Activated naive CD4-positive, alpha-beta T cell treated with anti-CD3 and anti-CD28 coated beads for 36 hours (primary cell): ENCODE measurements at regions of chr10 and their contacts with region 1.

Region 1: DNA sequence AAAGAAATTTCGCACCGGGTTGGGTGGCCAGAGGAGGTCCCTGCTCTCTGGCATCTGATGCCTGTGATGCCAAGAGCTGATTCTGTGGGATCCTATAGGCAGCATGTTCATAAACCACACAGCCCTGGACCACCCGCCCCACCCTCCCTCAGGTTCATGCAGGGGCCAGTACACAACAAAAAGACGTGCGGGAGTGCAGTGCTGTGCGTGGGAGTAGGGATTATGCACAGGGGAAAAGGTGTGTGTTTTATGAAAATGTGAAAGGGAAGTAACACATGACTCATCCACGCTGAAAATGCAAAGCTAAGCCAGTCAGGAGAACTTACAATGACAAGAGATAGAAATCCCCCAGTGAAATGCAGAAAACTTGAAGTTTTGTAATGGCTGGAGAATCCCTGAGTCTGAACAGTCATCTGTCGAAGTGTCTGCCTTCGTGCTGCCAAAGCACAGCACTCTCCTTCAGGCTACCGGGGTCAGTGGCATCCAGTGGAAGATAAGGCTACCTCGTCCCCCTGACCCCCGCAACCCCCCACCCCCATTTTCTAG is 1.1 kb downstream of the KIAA1217 start:
- DNase-seq: peak; percentile 78
- H3K4me3 Mint-ChIP-seq: peak overlapping the region; percentile 69
- H3K27ac Mint-ChIP-seq: peak overlapping the region; percentile 76
- H3K4me1 Mint-ChIP-seq: peaks cover 29% of the 10 kb centered on the region
- H3K27me3 Mint-ChIP-seq: peaks cover 47% of the 10 kb centered on the region

Region 2: DNA sequence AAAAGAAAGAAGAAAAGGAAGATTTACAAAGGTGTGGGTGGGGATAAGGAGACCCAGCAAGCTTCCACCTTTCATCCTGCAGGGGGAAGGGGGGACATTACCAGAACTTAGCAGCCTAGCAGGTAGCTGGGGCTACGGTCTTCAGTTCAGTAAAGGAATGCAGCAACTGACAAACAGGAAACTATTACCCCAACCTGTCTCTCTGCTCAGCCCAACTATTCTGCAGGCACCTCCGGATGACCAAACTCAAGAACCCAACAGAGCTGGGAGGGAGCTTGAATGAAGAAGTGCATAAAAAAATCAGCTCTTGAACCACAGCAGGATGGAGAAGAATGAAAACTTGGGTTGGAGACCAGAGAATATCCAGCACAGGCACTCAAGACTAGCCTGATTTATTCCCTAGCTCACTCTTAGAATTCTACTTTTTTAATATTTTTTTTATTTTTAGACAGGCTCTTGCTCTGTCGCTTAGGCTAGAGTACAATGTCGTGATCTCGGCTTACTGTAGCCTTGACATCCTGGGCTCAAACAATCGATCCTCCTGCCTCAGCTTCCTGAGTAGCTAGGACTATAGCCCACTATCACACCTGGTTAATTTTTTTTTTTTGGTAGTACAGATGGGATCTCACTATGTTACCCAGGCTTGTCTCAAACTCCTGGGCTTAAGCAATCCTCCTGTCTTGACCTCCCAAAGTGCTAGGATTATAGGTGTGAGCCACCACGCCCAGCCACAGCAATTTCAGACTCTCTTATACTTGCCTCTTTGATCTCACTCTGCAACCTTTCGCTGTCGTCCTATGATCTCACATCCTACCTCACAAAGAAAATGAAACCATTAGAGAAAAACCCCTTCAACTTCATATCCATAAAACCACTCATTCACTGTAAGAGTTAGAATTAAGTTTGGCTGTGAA is 846.9 kb before region 1 on chr10:
- CTCF ChIA-PET with region 1: no interaction called
- intact Hi-C with region 1: loop called (anchors 1 kb)
- DNase-seq: peak; percentile 72
- H3K4me3 Mint-ChIP-seq: peak overlapping the region; percentile 68
- H3K27ac Mint-ChIP-seq: peak overlapping the region; percentile 95
- H3K4me1 Mint-ChIP-seq: peaks cover 58% of the 10 kb centered on the region
- H3K27me3 Mint-ChIP-seq: no peaks in the 10 kb centered on the region

Region 3: GRCh38 chr10:23540401-23541030 is 669.5 kb before region 1 on chr10:
- CTCF ChIA-PET with region 1: no interaction called
- intact Hi-C with region 1: loop called (anchors 1 kb)
- DNase-seq: no peak
- H3K4me3 Mint-ChIP-seq: no peak overlapping the region
- H3K27ac Mint-ChIP-seq: peak overlapping the region; percentile 65
- H3K4me1 Mint-ChIP-seq: peaks cover 64% of the 10 kb centered on the region
- H3K27me3 Mint-ChIP-seq: no peaks in the 10 kb centered on the region

Region 4: DNA sequence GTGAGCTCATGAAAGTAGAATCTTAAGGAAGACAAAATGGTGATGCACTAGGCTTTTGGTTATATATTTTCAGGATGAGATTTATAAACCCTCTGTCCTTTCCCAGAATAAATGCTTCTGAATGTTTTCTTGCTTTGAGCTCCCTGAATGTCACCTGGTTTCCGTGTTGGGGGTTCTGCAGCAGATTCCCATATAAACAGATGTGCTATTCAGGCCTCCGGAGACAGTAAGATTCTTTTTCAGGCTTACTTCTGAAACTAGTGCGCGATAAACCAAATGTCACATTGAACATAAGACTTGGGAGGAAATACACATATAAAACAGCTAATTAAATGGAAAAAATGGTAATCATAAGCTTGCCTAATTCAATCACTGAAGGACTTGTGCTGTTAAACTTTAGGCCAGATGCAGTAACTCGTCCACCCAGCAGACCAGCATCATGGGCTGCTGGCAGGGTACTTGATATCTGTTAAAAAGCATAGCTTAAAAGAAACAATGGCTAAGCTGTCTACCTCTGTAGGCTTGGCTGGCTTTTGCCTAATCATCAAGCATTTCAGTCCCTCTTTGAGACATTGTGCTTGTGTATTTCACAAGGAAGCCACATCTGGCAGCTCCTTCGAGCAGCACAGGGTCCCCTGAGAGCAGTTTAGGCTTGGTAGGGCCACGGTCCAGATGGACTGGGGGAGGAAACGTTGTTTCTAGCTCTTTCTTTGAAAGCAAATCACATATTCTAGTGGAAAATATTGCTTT is 282.3 kb before region 1 on chr10:
- CTCF ChIA-PET with region 1: no interaction called
- intact Hi-C with region 1: no loop called
- DNase-seq: no peak
- H3K4me3 Mint-ChIP-seq: no peak overlapping the region
- H3K27ac Mint-ChIP-seq: no peak overlapping the region
- H3K4me1 Mint-ChIP-seq: no peaks in the 10 kb centered on the region
- H3K27me3 Mint-ChIP-seq: peaks cover 3% of the 10 kb centered on the region

Region 5: DNA sequence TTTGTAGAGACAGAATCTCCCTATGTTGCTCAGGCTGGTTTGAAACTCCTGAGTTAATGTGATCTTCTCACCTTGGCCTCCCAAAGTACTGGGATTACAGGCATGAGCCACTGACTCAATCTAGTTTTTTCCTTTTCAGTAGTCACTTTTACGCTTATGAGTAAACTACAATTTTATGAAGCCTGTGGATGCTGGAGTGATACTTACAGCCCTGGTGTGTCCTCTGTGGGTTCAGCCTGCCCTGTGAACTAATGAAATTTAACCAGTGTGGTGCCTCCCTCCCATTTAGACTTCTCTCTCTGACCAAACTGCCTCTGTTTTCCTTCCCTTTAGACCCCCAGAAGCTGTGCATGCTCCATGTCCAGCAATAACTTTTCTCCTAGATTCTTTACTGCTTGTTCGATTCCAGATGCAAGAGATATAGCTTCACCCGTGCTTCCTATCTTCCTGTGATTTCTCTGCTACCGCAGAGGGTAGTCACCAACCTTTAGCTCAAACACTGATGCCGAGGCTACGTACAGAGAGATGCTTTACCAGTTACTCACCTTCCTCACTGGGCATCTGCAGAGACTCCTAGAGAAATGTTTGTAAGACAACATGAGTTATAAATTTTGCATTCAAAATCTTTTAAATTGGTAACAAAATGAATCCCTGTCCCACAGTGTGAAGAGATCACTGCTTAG is 89.7 kb after region 1 on chr10:
- CTCF ChIA-PET with region 1: no interaction called
- intact Hi-C with region 1: loop called (anchors 1 kb)
- DNase-seq: no peak
- H3K4me3 Mint-ChIP-seq: no peak overlapping the region
- H3K27ac Mint-ChIP-seq: no peak overlapping the region
- H3K4me1 Mint-ChIP-seq: no peaks in the 10 kb centered on the region
- H3K27me3 Mint-ChIP-seq: peaks cover 10% of the 10 kb centered on the region

Region 6: GRCh38 chr10:24360282-24361127 is 150.5 kb after region 1 on chr10:
- CTCF ChIA-PET with region 1: no interaction called
- intact Hi-C with region 1: no loop called
- DNase-seq: peak; percentile 74
- H3K4me3 Mint-ChIP-seq: no peak overlapping the region
- H3K27ac Mint-ChIP-seq: no peak overlapping the region
- H3K4me1 Mint-ChIP-seq: no peaks in the 10 kb centered on the region
- H3K27me3 Mint-ChIP-seq: peaks cover 4% of the 10 kb centered on the region

Region 7: GRCh38 chr10:24518981-24519597 is 309.1 kb after region 1 on chr10:
- CTCF ChIA-PET with region 1: no interaction called
- intact Hi-C with region 1: loop called (anchors 5 kb)
- DNase-seq: peak; percentile 62
- H3K4me3 Mint-ChIP-seq: no peak overlapping the region
- H3K27ac Mint-ChIP-seq: no peak overlapping the region
- H3K4me1 Mint-ChIP-seq: peaks cover 14% of the 10 kb centered on the region
- H3K27me3 Mint-ChIP-seq: peaks cover 7% of the 10 kb centered on the region

Region 8: GRCh38 chr10:25016376-25017154 is 806.5 kb after region 1 on chr10 and contains the start of gene THNSL1:
- CTCF ChIA-PET with region 1: no interaction called
- intact Hi-C with region 1: loop called (anchors 2 kb)
- DNase-seq: peak; percentile 97
- H3K4me3 Mint-ChIP-seq: peak within 1 kb of the TSS; percentile 93
- H3K27ac Mint-ChIP-seq: peak within 1 kb of the TSS; percentile 99
- H3K4me1 Mint-ChIP-seq: peaks cover 19% of the 10 kb centered on the region
- H3K27me3 Mint-ChIP-seq: no peaks in the 10 kb centered on the region
- total RNA-seq, gene THNSL1: 6.3 to 7.1 TPM